Common myeloid progenitor, CD34-positive (primary cell): ENCODE measurements at regions of chr16 and their contacts with region 1.

Region 1: DNA sequence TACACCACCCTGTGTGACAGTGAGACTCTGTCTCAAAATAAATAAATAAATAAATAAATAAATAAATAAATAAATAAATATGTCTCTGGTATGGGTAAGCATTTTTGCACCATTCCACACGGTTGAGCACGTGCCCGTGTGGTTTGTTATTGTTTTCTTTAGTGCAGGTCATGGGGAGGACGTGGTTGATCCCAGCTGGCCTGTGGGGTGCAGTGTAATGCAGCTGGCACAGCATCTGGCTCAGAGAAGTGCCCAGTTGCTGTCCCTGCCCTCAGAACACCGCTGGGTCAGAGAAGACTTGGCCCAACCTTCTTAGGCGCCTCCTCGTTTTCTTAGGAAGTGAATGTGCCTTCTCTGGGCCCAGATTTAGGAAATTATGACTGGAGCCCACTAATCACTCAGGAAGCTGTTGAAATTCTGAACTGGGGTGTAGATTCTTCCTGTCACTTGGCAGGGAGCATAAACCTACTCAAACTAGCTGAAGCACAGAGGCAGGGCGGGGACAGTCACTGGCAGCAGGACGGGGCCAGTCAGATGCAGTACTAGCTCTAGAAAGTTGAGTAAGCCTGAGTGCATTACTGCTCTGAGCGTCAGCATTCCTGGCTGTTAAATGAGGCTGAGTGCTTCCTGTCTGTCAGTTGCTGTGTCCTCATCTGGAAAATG is 85.9 kb downstream of the SNX29 start:
- DNase-seq: peak in 2 of 3 donors; percentile 22 to 63
- H3K4me3 ChIP-seq: no peak overlapping the region
- H3K27ac ChIP-seq: no peak overlapping the region
- H3K4me1 ChIP-seq: peaks cover 0 to 14% (median 9%) of the 10 kb centered on the region in 4 experiments
- H3K27me3 ChIP-seq: no peaks in the 10 kb centered on the region

Region 2: GRCh38 chr16:11949527-11949926 is 112.9 kb before region 1 on chr16:
- CTCF ChIA-PET with region 1: interaction called, 22 read pairs
- POLR2A ChIA-PET with region 1: interaction called, 3 read pairs
- DNase-seq: peak; percentile 43 to 64 (median 51)
- H3K4me3 ChIP-seq: no peak overlapping the region
- H3K27ac ChIP-seq: no peak overlapping the region
- H3K4me1 ChIP-seq: peaks cover 0 to 2% (median 1%) of the 10 kb centered on the region in 4 experiments
- H3K27me3 ChIP-seq: no peaks in the 10 kb centered on the region